Activated T-helper 1 cell treated with anti-CD3 and anti-CD28 coated beads, Interleukin-12 subunit alpha, Interleukin-12 subunit beta, Interleukin-2, Interleukin-4 antibody, amounts not matched to agents 30 ng/mL and 10 ng/mL and 1 ng/mL, durations not matched to agents 14 hours and 24 hours and 36 hours (primary cell): ENCODE measurements at regions of chr5 and their contacts with region 1.

Region 1: GRCh38 chr5:126600631-126601511 is at the start of gene PHAX:
- DNase-seq: peak; percentile 72
- H3K4me3 Mint-ChIP-seq: peak within 1 kb of the TSS; percentile 95
- H3K27ac Mint-ChIP-seq: peak within 1 kb of the TSS; percentile 97
- H3K4me1 Mint-ChIP-seq: peaks cover 33% of the 10 kb centered on the region
- H3K27me3 Mint-ChIP-seq: peaks cover 10% of the 10 kb centered on the region
- total RNA-seq, gene PHAX: 46.6 and 52.9 TPM in 2 replicates

Region 2: DNA sequence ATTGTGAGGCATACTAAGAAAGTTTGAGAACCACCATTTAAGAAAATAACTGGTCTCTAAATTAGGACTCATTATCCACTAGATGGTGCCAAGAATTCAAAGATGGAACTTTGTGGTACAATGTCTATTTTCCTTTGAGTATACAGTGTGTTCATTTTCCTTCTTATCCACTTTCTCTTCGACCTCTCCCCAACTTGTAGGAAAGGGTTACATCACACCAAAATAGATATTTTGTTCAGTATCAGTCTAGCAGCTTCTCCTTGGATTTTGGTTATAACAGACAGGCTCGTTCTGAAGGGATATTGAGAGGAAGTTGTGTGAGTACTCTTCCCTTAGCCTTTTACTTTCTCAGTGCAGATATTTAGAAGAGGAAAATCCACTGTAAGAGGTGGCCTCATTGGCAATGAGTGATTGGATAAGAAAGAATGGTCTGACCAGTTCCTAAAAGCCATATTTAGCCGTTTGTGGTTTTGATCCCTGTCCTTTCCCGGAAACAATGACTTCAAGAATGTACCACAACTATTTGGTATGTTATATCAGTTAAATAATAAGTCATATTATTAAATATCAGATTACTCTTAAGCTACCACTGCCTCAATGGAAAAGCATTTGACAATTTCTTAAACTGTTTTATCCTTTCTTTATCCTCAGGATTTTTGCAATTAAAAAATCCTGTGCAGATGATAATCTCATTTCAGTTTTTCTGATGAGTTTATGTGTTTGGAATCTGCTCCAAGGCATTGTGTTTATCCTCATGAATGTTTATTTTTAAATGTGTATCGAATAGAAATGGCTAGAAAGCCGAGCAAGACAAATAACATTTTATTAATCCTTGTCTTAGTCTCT is 246.6 kb before region 1 on chr5:
- intact Hi-C with region 1: loop called (anchors 5 kb)
- DNase-seq: no peak
- H3K4me3 Mint-ChIP-seq: no peak overlapping the region
- H3K27ac Mint-ChIP-seq: no peak overlapping the region
- H3K4me1 Mint-ChIP-seq: peaks cover 6% of the 10 kb centered on the region
- H3K27me3 Mint-ChIP-seq: peaks cover 18% of the 10 kb centered on the region

Region 3: DNA sequence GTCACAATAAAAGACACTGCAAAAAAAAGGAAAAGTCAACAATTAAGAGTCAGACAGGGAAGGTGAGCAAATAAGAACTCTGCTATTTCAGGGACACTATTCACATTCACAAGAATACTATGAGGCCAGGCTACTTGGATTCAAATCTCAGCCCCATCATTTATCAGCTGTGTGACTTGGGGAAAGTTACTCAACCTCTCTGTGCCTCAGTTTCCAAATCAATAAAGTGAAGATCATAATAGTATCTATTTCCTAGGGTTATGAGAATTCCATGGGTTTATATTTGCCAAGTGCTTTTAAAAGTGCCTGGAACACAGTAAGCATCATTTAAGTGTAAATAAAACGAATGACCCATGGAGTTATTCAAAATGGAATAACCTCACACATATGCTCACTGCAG is 62.3 kb before region 1 on chr5:
- intact Hi-C with region 1: loop called (anchors 2 kb)
- DNase-seq: no peak
- H3K4me3 Mint-ChIP-seq: no peak overlapping the region
- H3K27ac Mint-ChIP-seq: no peak overlapping the region
- H3K4me1 Mint-ChIP-seq: no peaks in the 10 kb centered on the region
- H3K27me3 Mint-ChIP-seq: peaks cover 2% of the 10 kb centered on the region

Region 4: DNA sequence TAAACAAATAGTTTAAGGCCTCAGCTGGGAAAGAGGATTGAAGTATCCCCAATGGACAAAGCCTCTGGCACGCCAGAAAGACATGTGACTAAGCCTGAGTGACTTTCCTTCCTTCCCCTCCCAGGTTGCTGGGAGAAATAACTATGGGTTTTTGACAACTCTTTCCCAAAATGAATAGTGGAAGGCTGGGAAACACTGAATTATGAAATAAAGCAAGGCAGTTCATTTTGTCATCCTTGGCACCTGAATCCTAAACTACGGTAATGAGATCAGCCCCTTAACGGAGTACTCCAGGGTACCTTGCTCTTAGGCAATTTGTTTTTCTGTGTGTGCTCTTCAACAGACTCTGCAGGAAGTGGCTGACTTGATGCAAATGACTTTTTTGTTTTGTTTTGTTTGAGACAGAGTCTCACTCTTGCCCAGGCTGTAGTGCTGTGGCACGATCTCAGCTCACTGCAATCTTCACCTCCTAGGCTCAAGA is 251.3 kb after region 1 on chr5:
- intact Hi-C with region 1: loop called (anchors 5 kb)
- DNase-seq: peak; percentile 28
- H3K4me3 Mint-ChIP-seq: peak overlapping the region; percentile 80
- H3K27ac Mint-ChIP-seq: peak overlapping the region; percentile 87
- H3K4me1 Mint-ChIP-seq: peaks cover 43% of the 10 kb centered on the region
- H3K27me3 Mint-ChIP-seq: no peaks in the 10 kb centered on the region

Region 5: DNA sequence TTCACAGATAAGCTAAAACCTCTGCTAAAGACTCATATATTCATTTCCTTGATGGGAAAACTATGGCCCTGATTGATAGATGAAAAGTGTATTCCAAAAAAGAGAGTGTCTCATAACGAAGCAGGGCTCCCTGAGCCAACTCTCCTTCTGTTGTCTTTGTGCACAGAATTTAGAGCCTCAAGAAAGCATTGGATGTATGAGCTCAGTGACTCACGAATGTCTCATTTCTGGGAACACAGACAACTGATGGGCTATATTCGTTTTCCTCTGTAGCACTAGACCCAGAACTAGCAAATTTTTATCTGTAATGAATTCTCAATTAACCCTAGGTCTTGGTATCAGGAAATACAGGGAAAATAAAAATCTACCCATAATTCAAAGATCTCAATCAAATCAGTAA is 264.4 kb after region 1 on chr5:
- intact Hi-C with region 1: no loop called
- DNase-seq: no peak
- H3K4me3 Mint-ChIP-seq: no peak overlapping the region
- H3K27ac Mint-ChIP-seq: no peak overlapping the region
- H3K4me1 Mint-ChIP-seq: peaks cover 18% of the 10 kb centered on the region
- H3K27me3 Mint-ChIP-seq: no peaks in the 10 kb centered on the region

Region 6: GRCh38 chr5:127492854-127493738 is 892.2 kb after region 1 on chr5:
- intact Hi-C with region 1: loop called (anchors 2 kb)
- DNase-seq: no peak
- H3K4me3 Mint-ChIP-seq: no peak overlapping the region
- H3K27ac Mint-ChIP-seq: no peak overlapping the region
- H3K4me1 Mint-ChIP-seq: no peaks in the 10 kb centered on the region
- H3K27me3 Mint-ChIP-seq: peaks cover 34% of the 10 kb centered on the region